ENCODE measurements at regions of chr6 and their contacts with region 1.

Region 1: GRCh38 chr6:158220786-158221442 is 52.8 kb downstream of the GTF2H5 start:
- DNase-seq: peak; percentile 96

Region 2: GRCh38 chr6:158122048-158122447 is 98.9 kb before region 1 on chr6:
- intact Hi-C with region 1: no loop called
- DNase-seq: no peak

Region 3: DNA sequence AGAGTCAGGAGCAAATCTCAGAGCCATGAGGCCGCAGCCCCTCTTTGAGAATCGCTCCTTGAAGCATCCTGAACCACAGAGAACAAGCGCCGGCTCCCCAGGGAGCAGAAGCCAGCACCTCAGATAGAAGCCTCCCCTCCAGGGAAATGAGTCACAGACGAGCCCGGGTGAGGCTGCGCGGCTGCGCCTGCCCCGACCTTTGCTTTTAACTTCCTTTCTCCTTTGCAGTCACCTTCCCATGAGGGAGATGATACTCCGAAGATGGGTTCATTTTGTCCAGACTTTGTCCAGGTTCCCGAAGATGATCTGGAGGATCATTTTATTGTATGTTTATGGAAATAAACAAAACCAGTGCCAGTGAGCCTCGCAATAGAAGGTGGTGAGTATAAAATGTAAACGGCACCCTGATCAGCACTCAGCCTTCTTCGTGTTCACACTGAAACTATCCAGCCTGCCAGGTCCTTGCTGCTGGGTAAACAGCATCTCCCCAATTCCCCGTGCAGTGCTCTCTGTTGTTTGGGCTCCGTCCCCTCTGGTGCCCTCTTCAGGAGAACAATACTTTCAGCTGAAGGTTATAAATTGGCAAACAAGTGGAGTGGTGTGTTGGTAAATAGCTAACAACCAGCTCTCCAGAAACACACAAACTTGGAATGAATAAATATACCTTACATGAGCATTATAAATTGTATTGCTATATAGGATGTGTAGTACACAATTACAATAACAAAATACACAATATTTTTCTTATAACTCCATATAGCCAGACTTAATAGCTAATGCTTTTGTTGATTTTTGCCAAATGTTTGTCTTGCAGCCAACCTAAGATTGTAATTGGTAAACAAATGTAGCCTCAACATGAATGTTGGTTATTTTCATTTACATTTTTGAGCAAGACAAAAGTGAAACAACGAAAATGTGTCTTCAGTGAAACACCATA is 297.5 kb after region 1 on chr6:
- intact Hi-C with region 1: loop called in 1 of 2 experiments (anchors 10 kb)
- DNase-seq: peak; percentile 78

Region 4: GRCh38 chr6:158605266-158605878 is 384.5 kb after region 1 on chr6:
- intact Hi-C with region 1: loop called in 1 of 2 experiments (anchors 10 kb)
- DNase-seq: no peak

Region 5: DNA sequence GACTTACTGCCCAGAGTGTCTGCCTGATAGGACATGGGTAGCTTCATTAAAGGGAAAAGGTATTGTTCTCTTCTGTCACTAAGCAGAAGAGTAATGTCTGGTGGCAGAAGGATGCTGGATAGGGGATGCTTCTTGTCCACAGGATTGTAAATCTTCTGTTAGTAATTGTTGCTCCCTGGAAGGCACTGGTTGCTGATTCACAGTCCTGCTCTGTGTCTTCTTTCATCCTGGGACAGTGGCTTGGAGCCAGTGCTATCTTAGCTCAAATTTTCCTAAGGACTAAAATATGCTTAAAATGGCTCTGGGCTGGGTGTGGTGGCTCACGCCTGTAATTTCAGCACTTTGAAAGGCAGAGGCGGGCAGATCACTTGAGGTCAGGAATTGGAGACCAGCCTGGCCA is 476.9 kb after region 1 on chr6:
- intact Hi-C with region 1: loop called in 1 of 2 experiments (anchors 10 kb)
- DNase-seq: no peak